ENCODE measurements at regions of chr5 and their contacts with region 1.

Region 1: GRCh38 chr5:95846554-95847260 is 24.2 kb upstream of the GLRX start:
- DNase-seq: peak; percentile 37 to 69 (median 55)
- ATAC-seq: peak; percentile 61 to 80 (median 68)
- H3K4me3 ChIP-seq: no peak overlapping the region
- H3K27ac ChIP-seq: peak overlapping the region in 2 of 3 donors; percentile 53 to 97
- H3K4me1 ChIP-seq: peaks cover 0 to 55% (median 19%) of the 10 kb centered on the region in 4 donors
- H3K27me3 ChIP-seq: no peaks in the 10 kb centered on the region
- CTCF ChIP-seq: peak; percentile 95 to 98 (median 96)
- POLR2A ChIP-seq: no peak

Region 2: DNA sequence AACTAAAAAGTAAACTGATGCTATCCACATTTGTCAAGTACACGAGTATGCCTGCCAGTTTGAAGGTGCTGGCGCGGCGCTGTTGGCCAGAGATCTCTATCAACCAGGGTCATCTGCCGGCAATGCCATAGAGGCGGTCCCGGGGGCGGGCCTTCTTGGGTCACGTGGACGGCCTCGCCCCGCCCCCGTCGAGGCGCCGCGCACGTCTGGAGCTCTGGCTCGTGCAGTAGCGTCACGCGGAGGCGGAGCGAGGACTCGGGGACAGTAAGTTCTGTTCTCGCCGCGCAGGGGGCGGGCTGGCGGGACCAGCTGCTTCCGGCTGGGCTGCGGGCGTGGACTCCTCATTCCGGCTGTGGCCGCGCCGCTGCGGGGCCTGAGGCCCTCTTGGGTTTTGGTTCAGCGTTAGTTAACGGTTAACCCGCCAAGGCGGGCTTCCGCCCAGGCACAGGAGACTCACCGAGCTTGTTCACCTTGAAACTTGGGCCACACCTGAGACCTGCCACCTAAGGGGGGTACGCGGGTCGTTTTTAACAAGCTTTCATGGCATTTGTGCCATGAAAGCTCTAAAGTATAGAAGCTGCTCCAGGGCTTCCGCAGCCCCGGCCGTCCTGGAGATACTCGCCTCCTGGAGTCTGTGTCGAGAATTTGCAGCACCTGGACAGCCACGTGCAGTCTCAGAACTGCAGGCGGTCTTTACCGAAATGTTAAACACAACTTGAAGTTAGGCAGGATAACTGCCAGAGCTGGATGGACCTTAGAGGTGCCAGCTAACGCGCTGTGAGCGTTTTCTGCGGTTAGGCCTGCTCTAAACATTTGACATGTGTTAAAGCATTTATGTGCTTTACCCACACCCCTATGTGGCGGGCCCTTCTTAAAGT is 199.9 kb before region 1 on chr5 and contains the start of gene RFESD:
- intact Hi-C with region 1: loop called in 1 of 2 experiments (anchors 5 kb)
- DNase-seq: peak; percentile 99
- ATAC-seq: peak; percentile 86 to 92 (median 90)
- H3K4me3 ChIP-seq: peak within 1 kb of the TSS; percentile 27 to 56 (median 31)
- H3K27ac ChIP-seq: peak within 1 kb of the TSS; percentile 87 to 98 (median 96)
- H3K4me1 ChIP-seq: peaks cover 0 to 48% (median 7%) of the 10 kb centered on the region in 4 donors
- H3K27me3 ChIP-seq: no peaks in the 10 kb centered on the region
- CTCF ChIP-seq: peak in 3 of 4 donors; percentile 12 to 28 (median 13)
- POLR2A ChIP-seq: peak; percentile 97
- total RNA-seq, gene RFESD: 0.56 to 2.2 (median 1.6) TPM

Region 3: GRCh38 chr5:95664204-95664786 is 182.4 kb before region 1 on chr5:
- intact Hi-C with region 1: loop called in 1 of 2 experiments (anchors 10 kb)
- DNase-seq: no peak
- ATAC-seq: peak; percentile 62 to 80 (median 70)
- H3K4me3 ChIP-seq: no peak overlapping the region
- H3K27ac ChIP-seq: peak overlapping the region in 1 of 3 donors; percentile 10
- H3K4me1 ChIP-seq: peaks cover 0 to 5% (median 0%) of the 10 kb centered on the region in 4 donors
- H3K27me3 ChIP-seq: no peaks in the 10 kb centered on the region
- CTCF ChIP-seq: peak; percentile 77 to 82 (median 80)
- POLR2A ChIP-seq: no peak

Region 4: DNA sequence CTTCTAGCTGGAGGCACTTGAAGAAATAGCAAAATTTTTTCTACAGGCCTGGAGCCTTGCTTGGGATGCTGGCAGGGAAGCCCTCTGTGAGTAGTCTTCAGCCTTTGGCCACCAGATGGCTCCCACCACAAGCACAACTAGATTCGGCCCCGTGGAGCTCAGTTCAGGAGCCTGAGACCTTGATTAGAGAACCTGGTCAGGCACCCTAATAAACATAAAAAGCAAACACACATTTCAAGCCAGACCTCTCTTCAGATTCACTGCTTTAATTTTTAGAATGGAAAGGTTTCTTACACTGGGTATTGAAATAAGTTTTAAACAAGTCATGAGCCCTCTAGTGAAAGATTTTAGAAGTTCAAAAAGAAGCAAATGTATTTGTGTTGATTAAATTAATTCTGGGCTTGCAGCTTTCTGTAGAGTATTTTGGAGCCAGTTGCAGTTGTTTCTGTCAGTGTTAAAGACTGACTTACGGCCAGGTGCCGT is 65.6 kb before region 1 on chr5:
- intact Hi-C with region 1: loop called (anchors 5 to 10 kb)
- DNase-seq: peak; percentile 79 to 85 (median 82)
- ATAC-seq: peak; percentile 85 to 96 (median 92)
- H3K4me3 ChIP-seq: no peak overlapping the region
- H3K27ac ChIP-seq: peak overlapping the region in 2 of 3 donors; percentile 54 to 64
- H3K4me1 ChIP-seq: peaks cover 0 to 39% (median 11%) of the 10 kb centered on the region in 4 donors
- H3K27me3 ChIP-seq: no peaks in the 10 kb centered on the region
- CTCF ChIP-seq: peak; percentile 88 to 92 (median 91)
- POLR2A ChIP-seq: no peak

Measured in right lobe of liver (tissue), 6 donors.